MCF 10A (cell line): ENCODE measurements at regions of chr20 and their contacts with region 1.

Region 1: GRCh38 chr20:59571551-59572314 is 32.6 kb upstream of the PHACTR3 start:
- DNase-seq: peak; percentile 46
- H3K4me3 Mint-ChIP-seq: no peak overlapping the region
- H3K27ac Mint-ChIP-seq: no peak overlapping the region
- H3K4me1 Mint-ChIP-seq: no peaks in the 10 kb centered on the region
- H3K27me3 Mint-ChIP-seq: peaks cover 47% of the 10 kb centered on the region
- CTCF ChIP-seq: peak; percentile 93

Region 2: GRCh38 chr20:59328071-59328470 is 243.7 kb before region 1 on chr20:
- CTCF ChIA-PET with region 1: no interaction called
- POLR2A ChIA-PET with region 1: no interaction called
- intact Hi-C with region 1: no loop called
- DNase-seq: no peak
- H3K4me3 Mint-ChIP-seq: no peak overlapping the region
- H3K27ac Mint-ChIP-seq: no peak overlapping the region
- H3K4me1 Mint-ChIP-seq: no peaks in the 10 kb centered on the region
- H3K27me3 Mint-ChIP-seq: peaks cover 91% of the 10 kb centered on the region
- CTCF ChIP-seq: no peak

Region 3: GRCh38 chr20:59403261-59403961 is 168.3 kb before region 1 on chr20:
- CTCF ChIA-PET with region 1: no interaction called
- POLR2A ChIA-PET with region 1: no interaction called
- intact Hi-C with region 1: no loop called
- DNase-seq: peak; percentile 26
- H3K4me3 Mint-ChIP-seq: no peak overlapping the region
- H3K27ac Mint-ChIP-seq: no peak overlapping the region
- H3K4me1 Mint-ChIP-seq: no peaks in the 10 kb centered on the region
- H3K27me3 Mint-ChIP-seq: peaks cover 44% of the 10 kb centered on the region
- CTCF ChIP-seq: peak; percentile 92

Region 4: GRCh38 chr20:59518881-59519688 is 52.6 kb before region 1 on chr20:
- CTCF ChIA-PET with region 1: interaction called, 14 read pairs
- POLR2A ChIA-PET with region 1: no interaction called
- intact Hi-C with region 1: no loop called
- DNase-seq: peak; percentile 62
- H3K4me3 Mint-ChIP-seq: no peak overlapping the region
- H3K27ac Mint-ChIP-seq: no peak overlapping the region
- H3K4me1 Mint-ChIP-seq: no peaks in the 10 kb centered on the region
- H3K27me3 Mint-ChIP-seq: peaks cover 90% of the 10 kb centered on the region
- CTCF ChIP-seq: peak; percentile 82

Region 5: GRCh38 chr20:59560588-59561227 is 11.0 kb before region 1 on chr20:
- CTCF ChIA-PET with region 1: interaction called, 150 read pairs
- POLR2A ChIA-PET with region 1: no interaction called
- intact Hi-C with region 1: no loop called
- DNase-seq: peak; percentile 43
- H3K4me3 Mint-ChIP-seq: no peak overlapping the region
- H3K27ac Mint-ChIP-seq: no peak overlapping the region
- H3K4me1 Mint-ChIP-seq: peaks cover 5% of the 10 kb centered on the region
- H3K27me3 Mint-ChIP-seq: peaks cover 43% of the 10 kb centered on the region
- CTCF ChIP-seq: peak; percentile 59

Region 6: DNA sequence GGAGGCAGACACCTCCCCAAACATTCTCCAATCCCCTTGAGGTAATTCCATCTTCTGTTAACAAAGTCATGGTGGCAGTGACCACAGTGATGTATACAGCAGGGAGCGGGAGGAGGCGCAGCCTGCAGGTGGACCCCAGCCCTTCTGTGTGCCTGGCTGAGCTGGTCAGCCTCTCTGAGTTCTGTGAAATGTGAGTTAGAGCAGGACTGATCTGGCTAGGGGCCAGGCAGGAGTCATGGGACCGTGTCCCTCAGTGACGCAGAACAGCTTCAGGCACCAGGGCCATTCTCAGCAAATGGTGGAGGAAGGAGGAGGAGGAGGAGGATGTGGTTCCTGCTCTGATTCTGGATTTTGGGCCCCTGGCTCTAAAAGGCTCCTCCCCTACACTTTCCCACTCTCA is 39.5 kb after region 1 on chr20:
- CTCF ChIA-PET with region 1: interaction called, 16 read pairs
- POLR2A ChIA-PET with region 1: no interaction called
- intact Hi-C with region 1: no loop called
- DNase-seq: no peak
- H3K4me3 Mint-ChIP-seq: no peak overlapping the region
- H3K27ac Mint-ChIP-seq: no peak overlapping the region
- H3K4me1 Mint-ChIP-seq: no peaks in the 10 kb centered on the region
- H3K27me3 Mint-ChIP-seq: peaks cover 100% of the 10 kb centered on the region
- CTCF ChIP-seq: no peak

Region 7: GRCh38 chr20:59718751-59719150 is 147.0 kb after region 1 on chr20:
- CTCF ChIA-PET with region 1: interaction called, 10 read pairs
- POLR2A ChIA-PET with region 1: no interaction called
- intact Hi-C with region 1: no loop called
- DNase-seq: no peak
- H3K4me3 Mint-ChIP-seq: no peak overlapping the region
- H3K27ac Mint-ChIP-seq: no peak overlapping the region
- H3K4me1 Mint-ChIP-seq: no peaks in the 10 kb centered on the region
- H3K27me3 Mint-ChIP-seq: peaks cover 68% of the 10 kb centered on the region
- CTCF ChIP-seq: no peak

Region 8: DNA sequence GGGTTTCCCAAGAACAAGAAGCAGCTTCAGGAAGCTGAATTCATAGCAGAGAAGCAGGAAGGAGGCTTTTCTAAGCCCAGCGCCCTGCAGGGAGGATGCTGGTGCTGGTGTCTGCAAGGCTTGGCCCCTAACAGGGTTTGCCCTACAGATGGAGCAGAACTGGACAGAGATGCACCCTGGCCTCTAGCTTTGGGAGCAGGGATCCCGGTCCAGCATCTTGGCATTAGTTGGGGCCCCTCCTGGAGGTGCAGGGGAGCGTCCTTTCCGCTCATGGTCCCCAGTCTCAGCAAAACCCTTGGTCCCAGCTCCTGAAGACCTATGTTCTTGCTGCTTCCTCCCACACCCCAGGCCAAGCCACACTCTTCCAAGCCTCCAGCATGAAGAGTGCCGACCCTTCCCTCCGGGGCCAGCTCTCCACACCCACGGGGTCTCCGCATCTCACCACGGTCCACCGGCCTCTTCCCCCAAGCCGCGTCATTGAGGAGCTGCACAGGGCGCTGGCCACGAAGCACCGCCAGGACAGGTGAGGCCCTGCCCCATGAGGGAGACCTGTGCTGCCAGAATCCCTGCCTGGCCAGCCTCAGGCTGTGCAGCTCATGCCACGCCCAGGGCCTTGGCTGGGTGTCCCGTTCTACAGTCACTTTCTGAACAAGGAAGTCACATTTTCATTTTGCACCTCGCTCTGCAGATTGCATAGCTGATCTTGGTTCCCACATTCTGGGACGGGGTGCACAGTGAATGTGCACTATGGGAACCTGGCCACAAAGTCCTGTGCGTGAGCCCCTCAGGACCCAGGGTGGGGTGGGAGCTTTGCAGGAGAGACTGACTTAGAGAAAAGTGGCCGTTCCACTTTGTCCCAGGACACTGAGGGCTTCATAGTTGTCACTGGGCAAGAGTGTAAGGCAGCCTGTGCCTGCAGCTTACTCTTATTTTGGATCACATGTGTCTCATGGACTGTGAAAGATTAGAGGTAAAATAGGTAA is 201.5 kb after region 1 on chr20:
- CTCF ChIA-PET with region 1: interaction called, 12 read pairs
- POLR2A ChIA-PET with region 1: no interaction called
- intact Hi-C with region 1: no loop called
- DNase-seq: no peak
- H3K4me3 Mint-ChIP-seq: no peak overlapping the region
- H3K27ac Mint-ChIP-seq: no peak overlapping the region
- H3K4me1 Mint-ChIP-seq: no peaks in the 10 kb centered on the region
- H3K27me3 Mint-ChIP-seq: peaks cover 38% of the 10 kb centered on the region
- CTCF ChIP-seq: no peak